B cell (primary cell): ENCODE measurements at regions of chr16 and their contacts with region 1.

Region 1: DNA sequence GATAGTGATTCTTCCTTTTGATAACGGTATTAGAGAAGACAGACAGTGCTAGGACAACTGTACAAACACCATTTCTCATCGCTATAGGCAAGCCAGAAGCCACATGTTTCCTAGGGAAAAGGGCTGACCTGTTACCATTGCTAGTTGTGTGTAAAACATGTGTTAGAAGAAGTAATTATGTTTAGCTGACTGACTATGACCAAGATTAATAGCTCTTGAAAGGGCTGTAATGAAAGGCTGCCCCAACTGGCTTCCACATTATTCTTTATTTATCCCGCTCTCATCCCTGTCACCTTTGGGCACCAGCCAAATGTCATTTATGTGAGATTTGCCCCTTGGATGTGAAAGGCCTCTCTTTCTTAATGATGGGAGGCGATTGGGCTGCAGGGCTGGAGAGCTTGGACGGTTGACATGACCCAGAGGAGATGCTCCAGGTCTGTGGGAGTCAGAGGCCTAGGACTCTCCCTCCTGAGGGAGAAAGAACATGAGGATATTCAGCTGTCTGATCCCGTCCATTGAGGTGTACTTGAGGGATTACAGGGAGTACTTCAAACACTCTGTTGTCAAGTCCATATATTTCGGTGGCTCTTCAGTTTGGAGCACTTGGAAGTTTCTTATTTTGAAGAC is 51.1 kb downstream of the FTO start:
- DNase-seq: no peak
- ATAC-seq: no peak
- H3K4me3 ChIP-seq: no peak overlapping the region
- H3K4me3 Mint-ChIP-seq: no peak overlapping the region
- H3K27ac ChIP-seq: no peak overlapping the region
- H3K27ac Mint-ChIP-seq: no peak overlapping the region
- H3K4me1 ChIP-seq: peaks cover 3% of the 10 kb centered on the region in 2 donors
- H3K4me1 Mint-ChIP-seq: peaks cover 21% of the 10 kb centered on the region
- H3K27me3 ChIP-seq: no peaks in the 10 kb centered on the region
- H3K27me3 Mint-ChIP-seq: no peaks in the 10 kb centered on the region
- CTCF ChIP-seq: no peak

Region 2: DNA sequence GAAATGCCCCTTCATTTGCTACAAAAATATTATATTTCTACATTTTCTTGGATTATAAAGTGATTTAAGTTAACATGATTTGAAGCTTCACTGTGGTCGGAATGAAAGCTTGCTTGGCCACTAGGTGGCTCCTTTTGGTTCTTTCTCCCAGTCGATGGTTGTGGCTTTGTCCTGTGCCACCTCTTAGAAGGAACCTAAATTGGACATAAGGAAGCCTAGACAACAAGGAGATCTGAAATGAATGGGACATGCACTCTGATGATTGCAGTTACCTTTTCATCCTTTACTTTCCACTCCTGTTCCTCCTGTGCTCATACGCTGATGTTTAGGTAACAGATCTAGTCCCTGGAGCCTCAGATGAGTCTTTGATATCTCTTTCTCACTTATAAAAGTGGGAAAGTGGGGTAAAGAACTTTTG is 11.9 kb before region 1 on chr16:
- CTCF ChIA-PET with region 1: interaction called, 17 read pairs
- POLR2A ChIA-PET with region 1: no interaction called
- intact Hi-C with region 1: no loop called
- DNase-seq: peak; percentile 13
- ATAC-seq: no peak
- H3K4me3 ChIP-seq: no peak overlapping the region
- H3K4me3 Mint-ChIP-seq: no peak overlapping the region
- H3K27ac ChIP-seq: no peak overlapping the region
- H3K27ac Mint-ChIP-seq: no peak overlapping the region
- H3K4me1 ChIP-seq: peaks cover 9 to 12% of the 10 kb centered on the region in 2 donors
- H3K4me1 Mint-ChIP-seq: peaks cover 43% of the 10 kb centered on the region
- H3K27me3 ChIP-seq: no peaks in the 10 kb centered on the region
- H3K27me3 Mint-ChIP-seq: no peaks in the 10 kb centered on the region
- CTCF ChIP-seq: peak; percentile 64

Region 3: GRCh38 chr16:54208237-54208636 is 453.2 kb after region 1 on chr16:
- CTCF ChIA-PET with region 1: no interaction called
- POLR2A ChIA-PET with region 1: no interaction called
- intact Hi-C with region 1: no loop called
- DNase-seq: no peak
- ATAC-seq: no peak
- H3K4me3 ChIP-seq: no peak overlapping the region
- H3K4me3 Mint-ChIP-seq: no peak overlapping the region
- H3K27ac ChIP-seq: no peak overlapping the region
- H3K27ac Mint-ChIP-seq: no peak overlapping the region
- H3K4me1 ChIP-seq: no peaks in the 10 kb centered on the region
- H3K4me1 Mint-ChIP-seq: no peaks in the 10 kb centered on the region
- H3K27me3 ChIP-seq: no peaks in the 10 kb centered on the region
- H3K27me3 Mint-ChIP-seq: peaks cover 4% of the 10 kb centered on the region
- CTCF ChIP-seq: no peak